Right cardiac atrium (tissue), 5 donors: ENCODE measurements at regions of chr2 and their contacts with region 1.

Region 1: GRCh38 chr2:223101340-223102039 is 49.5 kb downstream of the KCNE4 start:
- DNase-seq: no peak
- ATAC-seq: peak; percentile 40 to 65
- H3K4me3 ChIP-seq: no peak overlapping the region
- H3K27ac ChIP-seq: no peak overlapping the region
- H3K4me1 ChIP-seq: peaks cover 5% of the 10 kb centered on the region
- H3K27me3 ChIP-seq: no peaks in the 10 kb centered on the region

Region 2: GRCh38 chr2:222982010-222982908 is 119.2 kb before region 1 on chr2:
- intact Hi-C with region 1: loop called in 1 of 4 experiments (anchors 5 kb)
- DNase-seq: peak; percentile 55 to 71 (median 67)
- ATAC-seq: peak; percentile 90 to 91
- H3K4me3 ChIP-seq: no peak overlapping the region
- H3K27ac ChIP-seq: no peak overlapping the region
- H3K4me1 ChIP-seq: no peaks in the 10 kb centered on the region
- H3K27me3 ChIP-seq: no peaks in the 10 kb centered on the region

Region 3: DNA sequence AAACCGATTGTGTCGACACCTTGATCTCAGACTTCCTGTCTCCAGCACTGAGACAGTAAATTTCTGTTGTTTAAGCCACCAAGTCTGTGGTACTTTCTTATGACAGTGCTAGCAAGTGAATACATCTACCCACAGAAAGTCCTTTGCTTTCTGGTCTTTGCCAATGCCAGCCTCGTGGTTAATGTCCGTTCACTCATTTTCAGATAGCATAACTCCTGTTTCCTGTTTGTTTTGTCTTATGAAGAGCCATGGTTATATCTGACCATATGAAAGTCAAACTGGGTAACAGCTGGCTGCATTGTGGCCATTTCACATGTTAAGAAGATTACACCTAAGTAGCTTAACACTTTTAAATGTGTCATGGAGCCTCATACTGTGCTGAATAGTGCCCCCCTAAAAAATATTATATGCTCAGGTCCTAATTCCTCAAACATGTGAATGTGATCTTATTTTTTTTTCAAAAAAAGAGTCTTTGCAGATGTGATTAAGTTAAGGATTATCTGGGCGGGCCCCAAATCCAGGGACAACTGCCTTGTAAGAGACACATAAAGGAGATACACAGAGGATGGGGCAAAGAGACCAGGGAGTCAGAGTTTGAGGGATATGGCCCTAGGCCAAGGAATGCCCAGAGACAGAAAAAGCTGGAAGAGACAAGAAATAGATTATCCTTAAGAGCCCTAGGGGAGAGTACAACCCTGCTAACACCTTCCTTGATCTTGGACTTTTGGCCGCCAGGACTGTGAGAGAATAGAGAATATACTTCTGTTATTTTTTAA is 68.5 kb after region 1 on chr2:
- intact Hi-C with region 1: no loop called
- DNase-seq: no peak
- ATAC-seq: no peak
- H3K4me3 ChIP-seq: no peak overlapping the region
- H3K27ac ChIP-seq: no peak overlapping the region
- H3K4me1 ChIP-seq: no peaks in the 10 kb centered on the region
- H3K27me3 ChIP-seq: no peaks in the 10 kb centered on the region

Region 4: DNA sequence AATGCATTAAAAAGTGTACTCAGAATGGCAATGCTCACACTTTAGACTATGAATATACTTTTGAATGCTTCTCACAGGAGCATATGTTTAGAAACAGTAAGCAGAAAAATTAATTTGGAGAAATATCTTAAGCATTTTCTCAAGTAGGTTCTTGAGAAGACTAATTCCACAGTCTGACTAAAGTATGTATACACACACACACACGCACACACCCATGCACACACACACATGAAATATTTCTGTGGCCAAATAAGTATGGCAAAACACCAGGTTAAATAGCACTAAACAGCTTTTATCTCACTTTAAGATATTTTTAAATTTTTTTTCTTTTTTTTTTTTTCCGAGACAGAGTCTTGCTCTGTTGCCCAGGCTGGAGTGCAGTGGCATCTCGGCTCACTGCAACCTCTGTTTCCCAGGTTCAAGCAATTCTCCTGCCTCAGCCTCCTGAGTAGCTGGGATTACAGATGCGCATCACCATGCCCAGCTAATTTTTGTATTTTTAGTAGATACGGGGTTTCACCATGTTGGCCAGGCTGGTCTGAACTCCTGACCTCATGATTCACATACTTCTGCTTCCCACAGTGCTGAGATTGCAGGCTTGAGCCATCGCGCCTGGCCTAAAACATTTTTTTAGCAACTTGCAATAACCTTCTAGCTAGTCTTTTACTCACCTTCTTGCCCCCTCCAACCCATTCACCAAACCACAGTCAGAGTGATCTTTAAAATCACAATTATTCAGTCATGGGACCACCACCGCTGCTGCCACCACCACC is 568.1 kb after region 1 on chr2:
- intact Hi-C with region 1: no loop called
- DNase-seq: no peak
- ATAC-seq: no peak
- H3K4me3 ChIP-seq: no peak overlapping the region
- H3K27ac ChIP-seq: no peak overlapping the region
- H3K4me1 ChIP-seq: no peaks in the 10 kb centered on the region
- H3K27me3 ChIP-seq: no peaks in the 10 kb centered on the region